ENCODE measurements at regions of chr7 and their contacts with region 1.

Region 1: GRCh38 chr7:44858161-44858560 is 10.3 kb upstream of the H2AZ2 start:
- DNase-seq: no peak
- H3K4me3 ChIP-seq: no peak overlapping the region
- CTCF ChIP-seq: no peak
- POLR2A ChIP-seq: no peak

Region 2: GRCh38 chr7:43395351-43395750 is 1462.8 kb before region 1 on chr7:
- intact Hi-C with region 1: no loop called
- DNase-seq: no peak
- H3K4me3 ChIP-seq: no peak overlapping the region
- CTCF ChIP-seq: no peak
- POLR2A ChIP-seq: no peak

Region 3: DNA sequence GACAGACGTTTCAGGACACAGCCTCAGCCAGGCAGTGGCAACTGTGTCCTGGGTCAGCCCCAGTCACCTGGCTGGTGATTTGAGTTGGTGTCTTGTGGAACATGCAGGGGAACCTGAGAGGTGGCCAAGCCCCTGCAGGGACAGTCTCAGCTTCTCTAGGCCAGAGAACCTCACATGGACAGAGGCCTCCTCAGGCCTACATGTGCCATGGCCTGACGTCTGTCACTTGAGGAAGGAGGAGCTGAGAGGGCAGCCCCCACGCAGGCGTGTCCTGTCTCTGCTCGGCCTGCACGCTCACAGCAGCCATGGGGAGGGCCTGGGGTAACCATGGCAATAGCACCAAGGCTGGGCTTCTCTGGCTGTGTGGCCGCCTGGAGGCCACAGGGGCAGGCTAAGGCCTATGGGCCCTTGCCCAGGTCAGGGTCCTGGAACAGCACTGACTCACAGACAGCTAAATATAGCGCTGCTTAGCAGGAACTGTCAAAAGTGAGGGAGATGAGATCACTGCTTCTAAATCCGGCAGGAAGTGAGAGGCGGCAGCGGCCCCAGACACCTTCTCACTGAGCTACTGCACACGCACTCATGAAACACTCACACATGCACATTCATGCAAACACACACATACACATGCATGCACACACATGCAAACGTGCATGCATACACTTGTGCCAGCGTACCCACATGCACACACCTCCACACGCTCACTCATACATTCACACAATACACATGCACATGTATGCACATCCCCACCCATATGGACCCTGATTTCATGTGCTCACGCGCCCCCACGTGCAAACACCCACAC is 600.3 kb before region 1 on chr7:
- intact Hi-C with region 1: no loop called
- DNase-seq: peak in 1 of 2 donors; percentile 38
- H3K4me3 ChIP-seq: no peak overlapping the region
- CTCF ChIP-seq: no peak
- POLR2A ChIP-seq: no peak

Region 4: GRCh38 chr7:44921607-44922359 is 63.6 kb after region 1 on chr7:
- intact Hi-C with region 1: loop called (anchors 10 kb)
- DNase-seq: peak; percentile 86 to 98
- H3K4me3 ChIP-seq: no peak overlapping the region
- CTCF ChIP-seq: peak in 1 of 3 donors; percentile 12
- POLR2A ChIP-seq: no peak

Region 5: DNA sequence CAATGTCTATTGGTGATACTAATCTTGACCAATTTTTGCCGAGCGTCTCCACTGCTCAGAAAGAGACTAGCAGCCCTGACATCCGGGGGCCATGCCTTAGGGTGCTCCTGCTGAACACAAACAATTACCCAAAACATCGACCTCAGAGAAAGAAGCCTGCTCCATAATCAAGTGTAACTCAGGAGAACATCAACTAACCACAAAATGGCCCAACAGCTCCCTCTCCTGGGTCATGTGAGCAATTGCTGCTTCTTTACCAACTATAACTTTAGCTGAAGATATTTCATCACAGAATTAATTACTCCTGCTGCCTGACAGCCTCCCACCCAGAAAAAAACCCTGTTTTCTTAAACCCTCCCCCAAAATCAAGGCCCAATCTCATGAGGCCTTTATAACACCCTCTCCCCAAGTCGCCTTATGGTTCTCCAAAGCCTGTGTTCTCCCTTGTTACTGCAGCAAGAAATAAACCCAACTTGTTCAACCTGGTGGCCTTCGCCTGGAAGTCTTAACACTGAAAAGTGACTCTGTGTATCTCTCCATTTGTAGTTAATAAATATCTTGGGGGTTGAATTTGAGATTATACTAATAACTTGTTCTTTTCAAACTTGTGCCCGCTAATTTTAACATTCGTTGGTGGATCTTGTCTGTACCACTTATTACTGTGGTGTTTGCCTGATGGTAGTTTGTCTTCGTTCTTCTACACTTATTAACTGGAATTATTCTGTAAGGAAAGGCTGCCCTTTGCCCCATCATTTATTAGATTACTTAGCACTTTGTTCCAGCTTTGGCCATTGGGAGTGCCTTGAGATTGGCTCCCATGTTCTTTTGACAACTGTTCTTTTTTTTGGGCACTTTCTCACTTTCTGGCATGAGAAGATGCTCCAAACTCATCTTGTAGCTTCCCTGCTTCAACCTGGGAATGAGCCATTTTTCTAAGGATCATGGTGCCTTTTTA is 278.2 kb after region 1 on chr7:
- intact Hi-C with region 1: loop called (anchors 10 kb)
- DNase-seq: peak in 1 of 2 donors; percentile 23
- H3K4me3 ChIP-seq: no peak overlapping the region
- CTCF ChIP-seq: peak in 1 of 3 donors; percentile 50
- POLR2A ChIP-seq: no peak